ENCODE measurements at regions of chr1 and their contacts with region 1.

Region 1: GRCh38 chr1:199173356-199173755 is 534.5 kb downstream of the PTPRC start:
- DNase-seq: peak in 7 of 9 donors; percentile 9 to 56 (median 25)
- ATAC-seq: peak; percentile 90
- H3K4me3 ChIP-seq: no peak overlapping the region
- H3K4me3 Mint-ChIP-seq: peak overlapping the region in 7 of 10 donors; percentile 8 to 55 (median 32)
- H3K27ac ChIP-seq: no peak overlapping the region
- H3K27ac Mint-ChIP-seq: peak overlapping the region in 8 of 9 donors; percentile 4 to 73 (median 44)
- H3K4me1 ChIP-seq: peaks cover 23 to 48% of the 10 kb centered on the region in 2 donors
- H3K4me1 Mint-ChIP-seq: peaks cover 28 to 56% (median 43%) of the 10 kb centered on the region in 7 donors
- H3K27me3 ChIP-seq: no peaks in the 10 kb centered on the region
- H3K27me3 Mint-ChIP-seq: peaks cover 0 to 14% (median 0%) of the 10 kb centered on the region in 5 donors

Region 2: DNA sequence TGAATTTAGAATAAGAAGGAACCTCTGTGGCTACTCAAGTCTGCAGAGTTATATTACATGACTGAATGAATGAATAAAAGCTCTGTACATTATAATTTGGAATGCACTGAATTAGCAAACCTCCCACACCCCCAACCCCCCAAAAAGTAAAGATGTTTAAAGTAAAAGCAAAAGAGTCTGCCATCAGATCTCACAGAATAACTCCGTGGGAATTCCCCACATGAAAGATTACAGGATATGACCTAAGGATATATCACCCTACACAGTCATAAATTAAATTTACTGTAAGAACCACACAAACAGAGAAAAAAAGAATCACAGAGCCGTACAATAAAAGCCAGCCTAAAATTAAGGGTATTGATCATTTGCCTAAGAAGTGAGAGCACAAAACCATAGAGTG is 52.8 kb after region 1 on chr1:
- CTCF ChIA-PET with region 1: no interaction called
- POLR2A ChIA-PET with region 1: no interaction called
- intact Hi-C with region 1: loop called in 1 of 2 experiments (anchors 1 kb)
- DNase-seq: peak in 7 of 9 donors; percentile 10 to 66 (median 30)
- ATAC-seq: peak; percentile 91
- H3K4me3 ChIP-seq: no peak overlapping the region
- H3K4me3 Mint-ChIP-seq: peak overlapping the region in 8 of 10 donors; percentile 2 to 72 (median 36)
- H3K27ac ChIP-seq: no peak overlapping the region
- H3K27ac Mint-ChIP-seq: peak overlapping the region; percentile 5 to 91 (median 56)
- H3K4me1 ChIP-seq: peaks cover 0 to 6% of the 10 kb centered on the region in 2 donors
- H3K4me1 Mint-ChIP-seq: peaks cover 9 to 23% (median 14%) of the 10 kb centered on the region in 7 donors
- H3K27me3 ChIP-seq: no peaks in the 10 kb centered on the region
- H3K27me3 Mint-ChIP-seq: no peaks in the 10 kb centered on the region

Region 3: DNA sequence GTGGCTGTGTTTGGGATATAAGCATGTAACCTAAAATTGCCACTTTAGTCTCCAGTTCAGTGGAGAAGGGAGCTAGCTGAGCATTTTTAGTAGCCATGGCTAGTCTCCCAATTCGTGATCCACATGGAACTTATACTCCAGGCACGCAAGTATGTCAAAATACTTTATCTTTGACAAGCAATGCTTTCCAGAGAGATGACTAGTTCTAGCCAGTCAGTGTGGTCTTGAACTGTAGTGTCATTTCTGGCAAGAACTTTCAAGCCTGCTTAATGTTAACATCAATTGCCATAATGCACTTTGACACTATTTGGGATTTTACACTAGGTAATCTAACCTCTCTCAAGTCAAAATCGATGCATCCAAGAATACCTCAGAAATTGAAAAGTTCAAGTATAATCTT is 125.5 kb after region 1 on chr1:
- CTCF ChIA-PET with region 1: no interaction called
- POLR2A ChIA-PET with region 1: no interaction called
- intact Hi-C with region 1: no loop called
- DNase-seq: no peak
- ATAC-seq: no peak
- H3K4me3 ChIP-seq: no peak overlapping the region
- H3K4me3 Mint-ChIP-seq: no peak overlapping the region
- H3K27ac ChIP-seq: no peak overlapping the region
- H3K27ac Mint-ChIP-seq: no peak overlapping the region
- H3K4me1 ChIP-seq: no peaks in the 10 kb centered on the region
- H3K4me1 Mint-ChIP-seq: no peaks in the 10 kb centered on the region
- H3K27me3 ChIP-seq: no peaks in the 10 kb centered on the region
- H3K27me3 Mint-ChIP-seq: peaks cover 3 to 22% (median 15%) of the 10 kb centered on the region in 5 donors

Measured in naive thymus-derived CD4-positive, alpha-beta T cell (primary cell).